Heart right ventricle (tissue), 16 donors: ENCODE measurements at regions of chr1 and their contacts with region 1.

Region 1: GRCh38 chr1:172398970-172399755 is 21.3 kb upstream of the C1orf105 start:
- DNase-seq: peak in 1 of 2 donors; percentile 54
- ATAC-seq: peak; percentile 80 to 92 (median 86)
- H3K4me3 ChIP-seq: peak overlapping the region in 3 of 10 donors; percentile 8 to 22 (median 12)
- H3K27ac ChIP-seq: peak overlapping the region; percentile 3 to 78 (median 58)
- H3K4me1 ChIP-seq: peaks cover 0 to 51% (median 40%) of the 10 kb centered on the region in 9 donors
- H3K27me3 ChIP-seq: no peaks in the 10 kb centered on the region
- CTCF ChIP-seq: peak; percentile 53 to 80 (median 65)

Region 2: GRCh38 chr1:172002725-172003345 is 396.3 kb before region 1 on chr1:
- intact Hi-C with region 1: loop called in 4 of 10 experiments (anchors 5 to 10 kb)
- DNase-seq: peak in 1 of 2 donors; percentile 9
- ATAC-seq: no peak
- H3K4me3 ChIP-seq: no peak overlapping the region
- H3K27ac ChIP-seq: no peak overlapping the region
- H3K4me1 ChIP-seq: peaks cover 0 to 10% (median 0%) of the 10 kb centered on the region in 9 donors
- H3K27me3 ChIP-seq: no peaks in the 10 kb centered on the region
- CTCF ChIP-seq: peak; percentile 25 to 81 (median 68)

Region 3: GRCh38 chr1:172089768-172090510 is 309.2 kb before region 1 on chr1:
- intact Hi-C with region 1: loop called in 9 of 10 experiments (anchors 1 to 10 kb)
- DNase-seq: peak; percentile 28 to 41
- ATAC-seq: peak in 7 of 8 donors; percentile 55 to 84 (median 73)
- H3K4me3 ChIP-seq: no peak overlapping the region
- H3K27ac ChIP-seq: no peak overlapping the region
- H3K4me1 ChIP-seq: no peaks in the 10 kb centered on the region
- H3K27me3 ChIP-seq: no peaks in the 10 kb centered on the region
- CTCF ChIP-seq: peak; percentile 31 to 81 (median 71)

Region 4: GRCh38 chr1:172144445-172145061 is 254.6 kb before region 1 on chr1:
- intact Hi-C with region 1: loop called in 7 of 10 experiments (anchors 1 to 10 kb)
- DNase-seq: peak; percentile 67 to 86
- ATAC-seq: peak; percentile 93 to 98 (median 96)
- H3K4me3 ChIP-seq: peak overlapping the region; percentile 29 to 63 (median 56)
- H3K27ac ChIP-seq: peak overlapping the region; percentile 61 to 91 (median 84)
- H3K4me1 ChIP-seq: peaks cover 0 to 41% (median 16%) of the 10 kb centered on the region in 9 donors
- H3K27me3 ChIP-seq: no peaks in the 10 kb centered on the region
- CTCF ChIP-seq: no peak

Region 5: GRCh38 chr1:172180501-172181285 is 218.5 kb before region 1 on chr1:
- intact Hi-C with region 1: no loop called
- DNase-seq: peak; percentile 43 to 55
- ATAC-seq: peak; percentile 69 to 96 (median 92)
- H3K4me3 ChIP-seq: peak overlapping the region in 8 of 10 donors; percentile 0 to 43 (median 22)
- H3K27ac ChIP-seq: peak overlapping the region; percentile 59 to 88 (median 79)
- H3K4me1 ChIP-seq: peaks cover 0 to 36% (median 24%) of the 10 kb centered on the region in 9 donors
- H3K27me3 ChIP-seq: no peaks in the 10 kb centered on the region
- CTCF ChIP-seq: no peak

Region 6: DNA sequence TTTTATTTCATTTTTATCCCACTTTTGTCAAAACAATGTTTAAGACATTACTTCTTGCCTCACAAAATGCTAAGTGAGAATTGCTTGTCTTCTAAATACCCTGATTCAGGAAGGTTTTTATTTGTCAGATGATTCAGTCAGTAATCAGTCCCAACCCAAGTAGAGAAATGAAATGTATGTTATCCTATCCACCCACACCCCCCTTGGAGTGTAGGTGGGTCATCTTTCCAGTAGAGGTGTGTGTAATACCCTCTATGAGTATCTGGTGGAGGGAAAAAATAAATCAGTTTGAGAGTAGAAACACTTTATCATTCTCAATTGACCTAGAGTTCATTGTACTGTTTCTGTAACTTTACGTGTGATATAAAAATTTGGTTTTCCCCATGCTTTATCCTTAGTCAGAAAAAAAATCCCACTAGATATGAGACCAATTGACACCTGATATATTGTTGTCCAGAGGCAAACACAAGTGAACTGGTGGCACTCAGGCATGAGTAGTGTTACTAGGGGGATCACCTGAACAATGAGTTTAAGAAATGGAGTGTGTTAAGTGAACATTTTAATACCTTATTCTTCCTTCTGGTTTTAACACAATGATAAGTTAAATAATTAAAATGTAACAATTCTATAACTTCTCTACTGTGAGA is 132.5 kb before region 1 on chr1:
- intact Hi-C with region 1: no loop called
- DNase-seq: no peak
- ATAC-seq: no peak
- H3K4me3 ChIP-seq: no peak overlapping the region
- H3K27ac ChIP-seq: no peak overlapping the region
- H3K4me1 ChIP-seq: peaks cover 0 to 12% (median 0%) of the 10 kb centered on the region in 9 donors
- H3K27me3 ChIP-seq: no peaks in the 10 kb centered on the region
- CTCF ChIP-seq: no peak

Region 7: GRCh38 chr1:172343240-172344160 is 55.7 kb before region 1 on chr1:
- intact Hi-C with region 1: loop called in 1 of 10 experiments (anchors 10 kb)
- DNase-seq: no peak
- ATAC-seq: peak in 7 of 8 donors; percentile 31 to 80 (median 70)
- H3K4me3 ChIP-seq: peak overlapping the region in 1 of 10 donors; percentile 11
- H3K27ac ChIP-seq: peak overlapping the region in 8 of 10 donors; percentile 19 to 76 (median 60)
- H3K4me1 ChIP-seq: peaks cover 0 to 50% (median 12%) of the 10 kb centered on the region in 9 donors
- H3K27me3 ChIP-seq: no peaks in the 10 kb centered on the region
- CTCF ChIP-seq: no peak

Region 8: DNA sequence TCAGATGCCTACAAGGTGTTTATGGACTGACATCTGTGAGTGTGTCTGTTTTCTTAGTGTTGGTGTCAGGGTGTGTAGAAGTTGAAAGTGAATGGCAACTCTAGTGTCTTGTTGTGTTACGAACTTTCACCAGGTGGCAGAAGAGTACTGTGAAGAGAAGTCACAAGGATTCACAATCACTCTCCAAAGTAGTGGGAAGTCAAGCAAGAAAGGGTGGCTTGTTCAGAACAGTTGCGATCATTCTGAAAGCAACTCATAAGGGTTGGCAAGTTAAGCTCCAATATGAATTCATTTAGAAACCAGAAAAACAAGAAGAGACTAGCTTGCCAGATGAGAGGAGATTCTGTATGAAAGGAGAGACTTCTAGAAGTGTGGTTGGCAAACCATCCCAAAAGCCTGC is 345.9 kb after region 1 on chr1:
- intact Hi-C with region 1: no loop called
- DNase-seq: peak in 1 of 2 donors; percentile 33
- ATAC-seq: peak in 7 of 8 donors; percentile 56 to 81 (median 77)
- H3K4me3 ChIP-seq: no peak overlapping the region
- H3K27ac ChIP-seq: no peak overlapping the region
- H3K4me1 ChIP-seq: peaks cover 0 to 26% (median 5%) of the 10 kb centered on the region in 9 donors
- H3K27me3 ChIP-seq: peaks cover 0 to 11% (median 0%) of the 10 kb centered on the region in 7 donors
- CTCF ChIP-seq: peak in 8 of 9 donors; percentile 20 to 73 (median 58)